ENCODE measurements at regions of chr7 and their contacts with region 1.

Region 1: DNA sequence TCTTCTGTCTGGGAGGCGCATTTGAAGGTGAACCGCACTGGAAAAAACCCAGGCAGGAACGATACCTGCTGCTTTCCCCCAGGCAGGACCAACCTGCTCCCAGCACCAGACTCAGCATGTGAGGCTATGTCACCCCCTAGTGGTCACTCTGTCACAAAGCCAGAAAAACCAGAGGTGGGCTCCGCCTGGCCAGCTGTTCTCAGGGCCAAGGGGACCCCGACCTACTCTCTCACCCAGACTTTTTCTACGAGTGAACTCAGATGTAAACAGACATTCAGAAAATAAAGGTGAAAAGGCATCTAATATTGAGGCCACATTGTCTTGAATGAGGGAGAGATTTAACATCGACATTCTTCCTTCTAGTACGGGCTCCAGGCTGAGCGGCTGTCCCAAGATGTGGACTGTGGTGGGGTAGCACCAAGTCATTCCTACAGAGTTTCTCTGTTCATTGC is 117.3 kb downstream of the PRKAG2 start:
- DNase-seq: no peak
- H3K4me3 ChIP-seq: no peak overlapping the region
- H3K27ac ChIP-seq: no peak overlapping the region
- H3K4me1 ChIP-seq: peaks cover 50% of the 10 kb centered on the region
- H3K27me3 ChIP-seq: no peaks in the 10 kb centered on the region
- CTCF ChIP-seq: peak; percentile 64 to 78 (median 77)
- POLR2A ChIP-seq: no peak

Region 2: DNA sequence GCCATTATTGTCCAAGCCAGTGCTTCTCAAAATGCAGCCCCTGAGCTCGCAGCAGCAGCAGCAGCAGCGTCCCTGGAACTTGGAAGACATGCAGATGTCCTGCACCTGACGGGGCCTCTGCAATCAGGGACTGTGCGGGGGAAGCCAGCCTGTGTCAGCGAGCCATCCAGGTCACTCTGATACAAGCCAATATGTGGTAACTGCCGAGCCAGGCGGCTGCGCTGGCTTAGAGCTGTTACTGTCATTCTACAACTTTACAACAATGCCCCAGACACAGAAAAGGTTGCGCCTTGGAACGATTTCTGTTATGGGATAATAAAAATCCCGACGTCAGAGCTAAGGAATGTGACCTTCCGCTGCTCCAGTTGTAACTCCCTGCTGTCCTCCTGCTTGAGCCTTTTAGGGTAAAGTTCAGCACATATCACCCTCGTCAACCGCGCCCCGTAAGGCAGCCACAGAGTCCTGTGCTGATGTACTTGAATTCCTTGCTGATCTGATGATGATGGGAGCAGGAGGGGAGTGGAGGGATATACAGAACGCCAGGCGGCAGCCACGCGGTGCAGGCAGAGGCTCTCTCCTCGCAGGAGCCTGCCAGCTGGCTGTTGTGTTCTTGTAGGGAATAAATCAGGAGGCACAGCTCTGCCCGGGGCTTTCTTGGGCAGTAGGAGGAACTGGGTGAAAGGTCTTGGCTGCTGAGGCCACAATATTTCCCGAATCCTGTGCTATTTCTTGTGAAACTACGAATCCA is 299.7 kb before region 1 on chr7:
- intact Hi-C with region 1: loop called (anchors 5 kb)
- DNase-seq: peak in 1 of 2 donors; percentile 100
- H3K4me3 ChIP-seq: peak overlapping the region; percentile 1 to 31
- H3K27ac ChIP-seq: peak overlapping the region; percentile 83
- H3K4me1 ChIP-seq: peaks cover 27% of the 10 kb centered on the region
- H3K27me3 ChIP-seq: no peaks in the 10 kb centered on the region
- CTCF ChIP-seq: peak in 1 of 3 experiments; percentile 41
- POLR2A ChIP-seq: no peak

Region 3: GRCh38 chr7:151566897-151567320 is 192.7 kb before region 1 on chr7:
- intact Hi-C with region 1: loop called (anchors 5 kb)
- DNase-seq: peak in 1 of 2 donors; percentile 89
- H3K4me3 ChIP-seq: no peak overlapping the region
- H3K27ac ChIP-seq: peak overlapping the region; percentile 60
- H3K4me1 ChIP-seq: peaks cover 18% of the 10 kb centered on the region
- H3K27me3 ChIP-seq: no peaks in the 10 kb centered on the region
- CTCF ChIP-seq: no peak
- POLR2A ChIP-seq: no peak

Region 4: DNA sequence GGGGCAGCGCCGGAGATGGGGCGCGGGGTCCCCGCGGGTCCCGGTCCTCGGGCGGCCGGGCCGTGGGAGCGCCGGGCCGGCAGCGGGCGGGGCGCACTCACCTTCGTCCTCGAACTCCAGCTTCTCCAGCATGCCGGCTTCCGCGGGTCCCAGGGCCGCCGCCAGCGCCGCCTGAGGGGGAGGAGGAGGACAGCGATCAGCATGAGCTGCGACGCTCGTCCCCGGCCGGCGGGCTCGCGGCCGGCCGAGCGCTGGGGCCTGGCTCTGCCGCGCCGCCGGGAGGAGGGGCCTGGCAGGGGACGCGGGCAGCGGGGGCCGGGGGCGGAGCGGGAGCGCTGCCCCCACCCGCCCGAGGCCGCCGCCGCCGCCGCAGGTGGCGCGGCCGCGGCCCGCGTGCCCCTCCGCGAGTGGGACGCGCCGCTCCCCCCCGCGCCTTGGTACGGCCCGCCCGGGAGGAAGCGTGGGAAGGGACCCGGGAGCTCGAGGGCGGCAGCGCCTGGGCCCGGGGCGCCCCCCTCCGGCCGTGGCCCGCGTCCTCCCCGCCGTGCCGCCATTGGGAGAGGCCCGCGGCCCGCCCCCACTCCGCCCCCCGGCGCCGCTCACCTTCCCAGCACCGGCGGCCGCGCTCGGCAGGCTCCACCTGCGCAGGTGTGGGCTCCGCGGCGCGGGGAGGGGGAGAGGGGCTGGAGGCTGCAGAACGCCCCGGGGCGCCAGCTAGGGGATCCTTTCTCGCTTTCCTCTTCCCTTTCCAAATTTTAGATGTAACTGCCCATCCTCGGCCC is 127.5 kb before region 1 on chr7:
- intact Hi-C with region 1: loop called (anchors 10 kb)
- DNase-seq: no peak
- H3K4me3 ChIP-seq: peak overlapping the region; percentile 62 to 84
- H3K27ac ChIP-seq: peak overlapping the region; percentile 94
- H3K4me1 ChIP-seq: peaks cover 32% of the 10 kb centered on the region
- H3K27me3 ChIP-seq: no peaks in the 10 kb centered on the region
- CTCF ChIP-seq: peak in 1 of 3 experiments; percentile 55
- POLR2A ChIP-seq: no peak

Region 5: DNA sequence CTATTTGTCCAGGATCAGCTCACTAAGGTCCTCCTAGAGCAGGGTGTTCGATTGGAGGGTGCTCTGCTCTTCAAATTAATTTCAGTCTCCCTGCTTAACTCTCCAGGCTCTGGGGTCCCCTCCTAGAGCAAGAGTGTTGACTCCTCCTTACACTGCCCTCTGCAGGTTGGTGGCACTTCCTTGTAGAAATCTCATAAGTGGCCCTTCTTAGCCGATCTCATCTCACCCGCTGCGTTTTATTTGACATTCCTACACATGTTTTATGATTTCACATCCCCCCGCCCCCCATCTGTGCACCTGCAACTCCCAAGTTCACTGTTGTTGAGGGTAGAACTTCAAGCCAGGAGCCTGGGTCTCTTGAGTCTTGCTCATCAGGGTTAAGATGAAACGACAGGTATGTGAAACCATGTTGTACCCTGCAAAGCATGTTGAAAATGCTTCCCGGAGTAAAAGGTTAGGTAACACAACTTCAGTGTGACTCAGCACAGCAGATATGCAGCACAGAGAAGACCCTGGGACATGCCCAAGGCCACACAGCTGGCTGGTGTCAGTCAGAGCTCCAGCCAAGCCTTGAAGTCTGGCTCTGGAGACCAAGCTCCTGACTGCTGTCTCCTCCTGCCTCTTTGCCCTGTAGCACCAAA is 53.9 kb before region 1 on chr7:
- intact Hi-C with region 1: no loop called
- DNase-seq: no peak
- H3K4me3 ChIP-seq: no peak overlapping the region
- H3K27ac ChIP-seq: no peak overlapping the region
- H3K4me1 ChIP-seq: peaks cover 18% of the 10 kb centered on the region
- H3K27me3 ChIP-seq: no peaks in the 10 kb centered on the region
- CTCF ChIP-seq: peak in 1 of 3 experiments; percentile 24
- POLR2A ChIP-seq: no peak

Region 6: DNA sequence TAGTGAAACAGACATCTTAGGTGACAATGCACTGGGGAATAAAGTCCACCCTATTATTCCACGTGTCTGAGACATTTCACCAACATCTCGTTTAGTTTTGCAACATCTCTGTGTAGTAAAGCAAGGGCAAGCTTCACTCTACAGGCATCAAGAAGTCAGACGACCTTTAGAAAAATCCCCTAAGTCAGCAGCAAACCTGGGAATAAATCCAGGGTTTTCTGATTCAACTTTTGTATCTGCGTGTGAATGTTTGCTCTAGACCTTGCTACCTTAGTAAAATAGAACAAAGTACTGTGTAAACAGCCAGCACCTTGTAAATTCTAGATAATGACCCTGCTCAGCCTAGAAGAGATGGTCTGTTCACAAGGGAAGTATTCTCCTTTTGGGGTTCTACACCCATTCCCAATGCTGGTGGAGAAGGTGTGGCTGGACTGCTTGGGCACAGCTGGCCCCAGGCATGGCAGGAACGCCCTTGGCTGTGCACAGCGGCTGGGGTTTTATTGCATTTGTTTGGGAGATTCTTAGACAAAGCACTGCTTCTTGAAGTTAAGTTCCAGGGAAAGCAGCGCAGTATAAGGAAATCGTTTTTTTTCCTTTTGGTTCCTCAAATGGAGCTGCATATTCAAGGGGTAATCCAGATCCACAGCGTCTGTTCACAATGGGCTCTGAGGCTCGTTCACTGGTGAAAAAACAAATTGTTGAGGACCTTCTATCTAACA is 158.3 kb after region 1 on chr7:
- intact Hi-C with region 1: no loop called
- DNase-seq: peak in 1 of 2 donors; percentile 52
- H3K4me3 ChIP-seq: no peak overlapping the region
- H3K27ac ChIP-seq: no peak overlapping the region
- H3K4me1 ChIP-seq: peaks cover 7% of the 10 kb centered on the region
- H3K27me3 ChIP-seq: no peaks in the 10 kb centered on the region
- CTCF ChIP-seq: no peak
- POLR2A ChIP-seq: no peak

Region 7: DNA sequence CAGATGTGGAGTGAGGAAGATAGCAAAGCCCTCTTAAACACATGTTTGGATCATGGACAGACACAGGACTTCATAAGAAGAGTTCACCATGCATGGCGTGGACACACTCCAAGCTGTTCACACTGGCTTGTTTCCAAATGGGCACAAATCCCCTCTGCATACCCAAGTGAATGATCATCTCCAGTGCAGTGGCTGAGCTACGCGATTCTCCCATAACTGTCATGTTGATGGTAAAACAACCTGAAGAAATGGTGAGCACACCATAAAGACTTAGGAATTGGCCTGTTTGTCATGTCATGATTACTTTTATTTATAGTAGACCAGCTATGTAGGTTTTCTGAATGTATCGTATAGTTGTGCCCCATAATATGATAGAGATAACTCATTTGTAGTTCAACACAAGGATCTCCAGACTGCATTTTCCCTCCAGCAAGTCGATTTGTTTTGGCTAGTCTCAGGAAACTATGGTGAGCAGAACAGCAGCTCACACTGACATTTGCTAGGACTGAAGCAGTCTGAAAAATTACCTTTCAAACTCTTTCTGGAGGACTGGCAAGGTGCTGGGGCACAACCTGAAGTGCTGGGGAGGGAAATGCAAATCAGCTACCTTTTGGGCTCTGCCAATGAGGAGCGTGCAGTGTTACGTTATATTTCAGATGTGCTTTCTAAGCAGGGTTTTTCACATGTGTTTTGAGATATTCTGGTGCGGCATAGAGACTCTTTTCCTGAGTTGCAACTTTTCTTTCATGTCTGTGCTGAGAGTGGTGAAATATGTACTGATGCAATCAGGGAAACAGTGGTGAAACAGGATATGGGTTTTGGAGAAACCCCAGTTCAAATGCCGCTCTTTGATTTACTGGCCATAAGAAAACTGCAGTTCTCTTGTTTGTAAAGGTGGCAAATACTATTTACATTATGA is 1662.9 kb after region 1 on chr7:
- intact Hi-C with region 1: no loop called
- DNase-seq: no peak
- H3K4me3 ChIP-seq: no peak overlapping the region
- H3K27ac ChIP-seq: no peak overlapping the region
- H3K4me1 ChIP-seq: no peaks in the 10 kb centered on the region
- H3K27me3 ChIP-seq: no peaks in the 10 kb centered on the region
- CTCF ChIP-seq: no peak
- POLR2A ChIP-seq: no peak